ENCODE measurements at regions of chr7 and their contacts with region 1.

Region 1: GRCh38 chr7:143380255-143380645 is 895 bp upstream of the ZYX start:
- DNase-seq: peak; percentile 90

Region 2: DNA sequence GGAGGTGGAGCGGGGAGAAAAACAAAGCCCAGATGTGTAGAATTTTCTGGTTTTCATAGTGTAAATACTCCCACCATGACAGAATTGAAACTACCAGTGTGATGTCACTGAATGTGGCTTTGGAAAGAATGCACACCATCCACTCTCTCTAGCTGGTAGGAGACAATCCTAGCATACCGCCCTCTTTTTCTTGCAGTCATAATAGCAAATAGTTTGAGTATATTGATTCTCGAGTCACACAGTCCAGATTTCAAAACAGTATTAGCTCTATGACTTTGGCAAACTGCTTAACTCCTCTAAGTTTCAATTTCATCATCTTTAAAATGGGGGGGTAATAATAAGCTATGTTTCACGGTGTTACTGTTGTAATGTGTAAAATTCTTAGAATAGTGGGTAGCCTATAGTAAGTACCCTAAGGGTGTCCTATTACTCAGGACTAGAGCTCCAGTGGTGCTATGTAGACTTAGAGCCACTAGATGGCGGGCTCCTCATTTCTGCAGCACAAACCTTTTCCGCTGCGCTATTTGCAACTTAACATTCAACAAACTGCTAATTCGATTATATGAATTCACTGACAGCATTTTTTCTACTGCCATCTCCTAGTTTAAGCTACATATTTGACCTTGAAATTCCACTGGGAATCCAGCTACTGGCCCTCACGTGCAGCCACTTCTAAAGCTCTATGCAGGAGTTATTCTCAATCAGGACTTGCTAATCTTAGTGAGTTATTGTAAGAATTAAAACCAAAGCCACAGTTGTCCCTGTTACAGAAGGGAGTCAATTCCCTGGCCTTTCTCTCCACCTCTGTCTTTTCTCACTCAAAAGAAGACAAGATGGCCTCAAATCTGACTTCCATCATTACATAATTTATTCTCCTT is 139.7 kb before region 1 on chr7:
- in situ Hi-C with region 1: loop called (anchors 25 kb)
- DNase-seq: peak; percentile 86

Region 3: DNA sequence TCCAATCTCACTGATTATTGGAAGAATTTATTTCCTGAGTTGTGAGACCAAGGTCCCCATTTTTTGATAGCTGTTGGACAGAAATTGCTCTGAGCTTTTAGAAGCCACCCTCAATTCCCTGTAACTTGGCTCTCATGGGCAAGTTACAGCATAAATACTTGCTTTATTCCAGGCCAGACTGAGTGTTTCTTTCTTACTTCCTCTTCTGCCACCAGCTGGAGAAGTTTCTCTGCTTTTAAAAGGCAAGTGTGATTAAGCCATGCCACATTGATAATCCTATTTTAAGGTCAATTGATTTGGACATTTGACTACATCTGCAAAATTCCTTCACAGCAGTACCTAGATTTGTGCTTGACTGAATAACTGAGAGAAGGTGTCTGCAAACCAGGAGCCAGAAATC is 83.3 kb after region 1 on chr7:
- in situ Hi-C with region 1: no loop called
- DNase-seq: no peak

Measured in SK-MEL-5 (cell line).